ENCODE measurements at regions of chr10 and their contacts with region 1.

Region 1: DNA sequence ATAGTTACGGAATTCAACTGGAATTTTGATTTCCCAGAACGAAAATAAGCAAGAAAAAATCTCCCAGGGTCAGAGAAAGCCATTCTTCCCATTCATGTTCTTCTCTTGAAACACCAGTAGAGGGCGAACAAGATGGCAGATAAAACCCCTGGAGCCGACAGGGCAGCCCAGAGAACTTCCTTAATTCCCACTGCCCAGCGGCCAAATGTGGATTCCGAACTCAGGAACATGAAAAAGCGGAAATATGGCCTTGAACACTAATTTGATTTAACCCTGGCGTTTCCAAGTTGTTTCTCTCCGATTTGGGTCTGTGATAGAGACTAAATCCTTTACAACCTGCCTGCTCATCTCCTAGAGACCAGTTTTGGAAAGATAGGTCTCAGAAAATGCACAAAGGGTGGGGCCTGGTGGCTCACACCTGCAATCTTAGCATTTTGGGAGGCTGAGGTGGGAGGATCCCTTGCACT is 100.7 kb upstream of the WAC start:
- DNase-seq: no peak
- H3K4me3 ChIP-seq: peak overlapping the region in 1 of 4 donors; percentile 17
- H3K27ac ChIP-seq: no peak overlapping the region
- H3K4me1 ChIP-seq: peaks cover 0 to 9% (median 6%) of the 10 kb centered on the region in 4 donors
- H3K27me3 ChIP-seq: peaks cover 0 to 2% (median 0%) of the 10 kb centered on the region in 4 donors
- CTCF ChIP-seq: peak; percentile 71 to 83 (median 77)
- EP300 ChIP-seq: no peak
- POLR2A ChIP-seq: no peak

Region 2: GRCh38 chr10:28587970-28588290 is 155.7 kb after region 1 on chr10:
- intact Hi-C with region 1: loop called (anchors 10 kb)
- DNase-seq: no peak
- H3K4me3 ChIP-seq: no peak overlapping the region
- H3K27ac ChIP-seq: peak overlapping the region; percentile 33 to 58 (median 52)
- H3K4me1 ChIP-seq: peaks cover 36 to 52% (median 43%) of the 10 kb centered on the region in 4 donors
- H3K27me3 ChIP-seq: no peaks in the 10 kb centered on the region
- CTCF ChIP-seq: peak; percentile 7 to 24 (median 14)
- EP300 ChIP-seq: no peak
- POLR2A ChIP-seq: no peak